Dendritic cell treated with granulocyte-macrophage colony-stimulating factor and Interleukin-4, amounts not matched to agents 40 ng/mL and 50 ng/mL, for 4 days (primary cell): ENCODE measurements at regions of chr9 and their contacts with region 1.

Region 1: DNA sequence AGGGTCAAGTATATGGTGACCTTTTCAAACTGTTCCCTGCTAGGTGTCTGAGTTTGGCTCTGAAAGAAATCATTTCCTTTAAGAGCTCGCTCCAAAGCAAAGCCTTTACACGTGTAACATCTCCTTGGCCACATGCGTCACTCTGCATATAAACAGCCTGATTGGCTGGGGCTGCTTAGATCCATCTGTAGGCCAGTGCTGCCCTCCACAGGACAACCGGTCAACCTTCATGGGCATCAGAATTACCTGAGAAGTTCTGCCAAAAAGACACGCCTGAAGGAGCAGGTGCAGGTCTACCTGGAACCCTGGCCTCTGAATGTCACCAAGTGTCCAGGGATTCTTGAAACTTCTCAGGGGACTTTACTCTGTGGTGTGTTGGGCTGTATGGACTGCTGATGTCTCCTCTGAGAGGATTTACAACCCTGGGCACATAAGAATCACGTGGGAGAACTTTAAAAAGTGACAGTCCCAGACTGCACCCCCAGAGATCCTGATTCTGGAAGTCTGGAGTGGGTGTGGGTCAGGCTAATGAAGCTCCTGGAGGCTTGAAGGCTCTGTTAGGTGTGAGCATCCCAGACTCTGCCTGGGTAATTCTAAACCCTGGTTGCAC is 497.6 kb downstream of the GADD45G start:
- H3K4me3 Mint-ChIP-seq: no peak overlapping the region
- H3K27ac Mint-ChIP-seq: no peak overlapping the region
- H3K4me1 Mint-ChIP-seq: peaks cover 2% of the 10 kb centered on the region
- H3K27me3 Mint-ChIP-seq: peaks cover 3% of the 10 kb centered on the region

Region 2: GRCh38 chr9:89576404-89576839 is 526.0 kb before region 1 on chr9:
- intact Hi-C with region 1: loop called (anchors 5 kb)
- H3K4me3 Mint-ChIP-seq: no peak overlapping the region
- H3K27ac Mint-ChIP-seq: no peak overlapping the region
- H3K4me1 Mint-ChIP-seq: peaks cover 29% of the 10 kb centered on the region
- H3K27me3 Mint-ChIP-seq: peaks cover 5% of the 10 kb centered on the region

Region 3: GRCh38 chr9:89597711-89598625 is 504.4 kb before region 1 on chr9:
- intact Hi-C with region 1: loop called (anchors 1 kb)
- H3K4me3 Mint-ChIP-seq: no peak overlapping the region
- H3K27ac Mint-ChIP-seq: no peak overlapping the region
- H3K4me1 Mint-ChIP-seq: peaks cover 5% of the 10 kb centered on the region
- H3K27me3 Mint-ChIP-seq: peaks cover 9% of the 10 kb centered on the region

Region 4: DNA sequence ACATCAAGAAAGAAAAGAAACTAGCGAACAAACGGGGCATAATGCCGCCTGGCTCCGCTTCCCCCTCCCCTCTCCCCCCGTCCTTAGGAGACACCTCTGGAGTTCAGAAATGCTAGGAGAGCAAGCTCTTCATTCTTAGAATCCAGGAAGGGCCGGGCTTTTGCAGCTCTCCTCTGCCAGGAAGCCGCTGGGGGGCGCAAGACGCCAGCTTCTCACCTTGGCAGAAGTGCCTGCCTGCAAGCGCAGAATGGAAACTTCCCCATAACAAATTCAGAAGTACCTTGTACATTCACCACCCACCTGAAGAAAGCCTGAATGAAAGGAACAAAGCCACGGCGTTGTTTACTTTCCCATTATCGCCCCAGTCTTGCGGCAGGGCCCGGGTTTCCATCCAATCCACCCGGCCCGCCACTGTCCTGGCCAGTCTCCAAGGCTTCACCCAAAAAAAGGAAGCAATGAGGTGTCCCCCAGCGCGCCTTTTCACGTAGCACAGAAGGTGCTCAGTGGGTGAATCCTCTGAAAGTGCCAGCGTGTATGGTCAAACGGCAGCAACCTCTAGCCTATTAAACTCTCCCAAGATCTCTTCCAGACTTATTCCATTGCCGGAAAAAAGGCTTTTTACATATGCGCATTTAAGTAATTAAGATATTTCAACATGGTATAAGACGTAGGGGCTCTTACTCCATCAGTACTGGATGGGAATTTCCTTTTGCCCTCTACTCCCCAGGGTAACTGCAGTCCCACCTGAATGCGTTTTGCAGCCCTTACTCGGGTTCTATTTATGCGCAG is 499.2 kb before region 1 on chr9:
- intact Hi-C with region 1: loop called (anchors 1 kb)
- H3K4me3 Mint-ChIP-seq: peak overlapping the region; percentile 73
- H3K27ac Mint-ChIP-seq: peak overlapping the region; percentile 34
- H3K4me1 Mint-ChIP-seq: peaks cover 28% of the 10 kb centered on the region
- H3K27me3 Mint-ChIP-seq: peaks cover 11% of the 10 kb centered on the region

Region 5: GRCh38 chr9:89919169-89919681 is 183.2 kb before region 1 on chr9:
- intact Hi-C with region 1: loop called (anchors 5 kb)
- H3K4me3 Mint-ChIP-seq: no peak overlapping the region
- H3K27ac Mint-ChIP-seq: no peak overlapping the region
- H3K4me1 Mint-ChIP-seq: peaks cover 11% of the 10 kb centered on the region
- H3K27me3 Mint-ChIP-seq: peaks cover 20% of the 10 kb centered on the region